Psoas muscle (tissue), 8 donors: ENCODE measurements at regions of chr16 and their contacts with region 1.

Region 1: GRCh38 chr16:30378236-30379204 is 3.8 kb downstream of the SEPTIN1 start:
- DNase-seq: peak; percentile 99
- ATAC-seq: peak; percentile 78 to 96 (median 89)
- H3K4me3 ChIP-seq: peak overlapping the region; percentile 71
- H3K27ac ChIP-seq: peak overlapping the region; percentile 97
- H3K4me1 ChIP-seq: peaks cover 32% of the 10 kb centered on the region
- H3K27me3 ChIP-seq: no peaks in the 10 kb centered on the region
- CTCF ChIP-seq: peak; percentile 17

Region 2: DNA sequence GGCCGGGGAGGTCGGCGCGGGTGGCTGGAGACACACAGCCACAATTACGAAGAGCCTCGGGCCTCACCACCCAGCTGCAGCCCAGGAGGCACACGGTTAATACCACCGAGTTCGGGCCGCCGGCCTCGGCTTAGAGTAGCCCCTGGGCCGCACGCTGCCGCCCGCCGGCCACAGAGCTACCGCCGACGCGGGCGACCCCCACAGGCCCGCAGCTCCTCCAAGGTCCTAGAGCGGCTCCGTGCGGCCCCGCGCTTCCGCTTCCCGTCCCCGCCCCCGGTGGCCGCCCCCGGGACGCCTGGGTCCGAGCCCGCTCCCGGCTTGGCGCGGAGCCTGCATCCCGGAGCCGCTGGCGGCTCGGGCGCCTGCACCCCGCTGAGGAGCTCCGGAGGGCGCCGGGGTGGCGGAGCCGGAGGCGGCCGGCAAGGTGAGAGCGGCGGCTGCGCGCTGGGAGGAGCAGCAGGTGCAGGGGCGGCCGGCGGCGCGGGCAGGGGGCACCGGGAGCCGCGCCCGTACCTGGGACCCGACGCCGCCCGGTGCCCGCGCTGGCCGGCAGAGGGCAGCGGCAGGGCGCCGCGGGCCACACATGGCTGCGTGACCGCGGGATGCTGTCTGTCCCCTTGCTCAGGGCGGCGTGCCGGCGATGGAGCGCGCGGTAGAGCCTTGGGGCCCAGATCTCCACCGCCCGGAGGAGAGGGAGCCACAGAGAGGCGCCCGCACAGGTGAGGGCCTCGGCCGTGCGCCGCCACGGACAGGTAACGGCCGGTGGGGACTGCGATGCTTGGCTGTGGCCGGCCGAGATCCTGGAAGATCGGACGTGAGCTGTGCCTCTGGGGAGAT is 16.9 kb after region 1 on chr16 and contains the start of gene ZNF48:
- intact Hi-C with region 1: loop called in 1 of 2 experiments (anchors 2 kb)
- DNase-seq: peak; percentile 90 to 95
- ATAC-seq: peak; percentile 96 to 98 (median 96)
- H3K4me3 ChIP-seq: peak within 1 kb of the TSS; percentile 91
- H3K27ac ChIP-seq: peak within 1 kb of the TSS; percentile 87
- H3K4me1 ChIP-seq: peaks cover 20% of the 10 kb centered on the region
- H3K27me3 ChIP-seq: no peaks in the 10 kb centered on the region
- CTCF ChIP-seq: peak; percentile 55
- total RNA-seq, gene ZNF48: 2.8 to 7.8 (median 5.6) TPM

Region 3: GRCh38 chr16:30491744-30492308 is 113.3 kb after region 1 on chr16:
- intact Hi-C with region 1: no loop called
- DNase-seq: no peak
- ATAC-seq: peak; percentile 62 to 73 (median 68)
- H3K4me3 ChIP-seq: no peak overlapping the region
- H3K27ac ChIP-seq: no peak overlapping the region
- H3K4me1 ChIP-seq: no peaks in the 10 kb centered on the region
- H3K27me3 ChIP-seq: no peaks in the 10 kb centered on the region
- CTCF ChIP-seq: no peak